GM13976 (cell line): ENCODE measurements at regions of chr11 and their contacts with region 1.

Region 1: GRCh38 chr11:73335204-73335923 is 27.3 kb downstream of the ARHGEF17 start:
- DNase-seq: peak; percentile 84
- CTCF ChIP-seq: peak; percentile 94

Region 2: DNA sequence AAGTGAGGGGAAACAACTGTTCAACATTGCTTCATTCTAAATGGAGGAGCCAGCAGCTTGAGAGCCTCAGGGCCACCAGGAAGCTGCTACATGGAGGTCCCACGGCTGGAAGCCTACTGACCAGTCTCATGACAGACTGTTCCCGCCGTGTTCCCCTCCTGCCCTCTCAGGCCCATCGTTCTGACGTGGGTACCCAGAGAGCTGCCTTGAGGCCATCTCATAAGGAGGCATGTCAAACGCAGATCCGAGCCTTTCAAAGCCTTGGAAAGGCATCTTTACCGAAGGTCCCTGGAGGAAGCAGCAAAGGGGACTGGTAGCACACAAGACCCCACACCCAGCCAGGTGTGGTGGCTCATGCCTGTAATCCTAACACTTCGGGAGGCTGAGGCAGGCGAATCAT is 35.6 kb before region 1 on chr11:
- in situ Hi-C with region 1: loop called (anchors 5 kb)
- DNase-seq: no peak
- CTCF ChIP-seq: no peak